ENCODE measurements at regions of chr19 and their contacts with region 1.

Region 1: DNA sequence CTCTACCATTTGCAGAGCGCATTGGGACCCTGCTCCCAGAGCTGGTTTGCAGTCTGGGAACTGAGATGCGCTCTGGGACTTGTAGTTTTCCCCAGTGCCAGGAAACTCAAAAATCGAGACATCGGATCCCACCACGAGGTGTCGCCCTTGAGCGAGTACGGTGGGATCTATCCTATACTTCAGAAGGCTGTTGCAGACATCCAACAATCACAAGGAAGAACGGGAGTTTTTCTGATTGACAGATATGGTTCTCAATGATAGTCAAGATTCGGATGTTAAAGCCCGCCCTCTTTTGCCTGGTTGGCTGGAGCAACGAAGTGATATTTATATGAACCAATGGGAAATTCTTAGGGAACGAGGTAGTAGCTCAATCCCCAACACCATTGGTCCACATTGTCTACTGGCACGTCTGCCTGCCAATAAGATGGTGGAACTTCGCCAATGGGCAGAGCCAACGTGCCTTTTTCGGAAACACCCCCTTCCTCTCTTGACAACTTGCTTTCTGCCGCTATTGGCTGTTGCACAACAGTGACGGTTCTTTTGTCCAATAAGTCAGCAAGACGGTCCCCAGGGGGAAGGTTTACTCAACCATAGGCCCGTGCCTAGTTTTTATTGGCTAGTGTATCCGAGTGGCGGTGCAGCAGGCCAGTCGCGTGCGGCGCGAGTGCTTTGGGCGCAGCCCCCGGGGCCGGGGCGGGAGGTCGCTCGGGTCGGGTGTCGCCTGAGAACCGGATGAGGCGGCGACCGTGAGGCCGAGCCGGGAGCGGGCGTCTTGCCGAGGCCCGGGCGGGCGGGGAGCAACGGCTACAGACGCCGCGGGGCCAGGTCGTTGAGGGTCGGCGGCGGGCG is at the start of gene DNM2:
- DNase-seq: peak; percentile 98 to 100 (median 99)
- ATAC-seq: peak; percentile 90
- H3K4me3 ChIP-seq: peak within 1 kb of the TSS; percentile 71 to 90
- H3K27ac ChIP-seq: peak within 1 kb of the TSS; percentile 62 to 95 (median 87)
- H3K4me1 ChIP-seq: peaks cover 39% of the 10 kb centered on the region
- H3K27me3 ChIP-seq: no peaks in the 10 kb centered on the region
- CTCF ChIP-seq: peak; percentile 64 to 99 (median 96)
- POLR2A ChIP-seq: peak; percentile 40 to 62 (median 60)
- total RNA-seq, gene DNM2: 98.6 to 158 TPM

Region 2: GRCh38 chr19:10769533-10770491 is 52.2 kb after region 1 on chr19:
- intact Hi-C with region 1: loop called (anchors 10 kb)
- DNase-seq: peak; percentile 71 to 84 (median 80)
- ATAC-seq: peak; percentile 84
- H3K4me3 ChIP-seq: no peak overlapping the region
- H3K27ac ChIP-seq: peak overlapping the region; percentile 46 to 75 (median 60)
- H3K4me1 ChIP-seq: peaks cover 58% of the 10 kb centered on the region
- H3K27me3 ChIP-seq: no peaks in the 10 kb centered on the region
- CTCF ChIP-seq: peak in 5 of 7 experiments; percentile 29 to 56 (median 51)
- POLR2A ChIP-seq: no peak

Region 3: GRCh38 chr19:10848230-10848856 is 130.8 kb after region 1 on chr19 and contains the start of gene C19orf38:
- intact Hi-C with region 1: loop called (anchors 10 kb)
- DNase-seq: no peak
- ATAC-seq: no peak
- H3K4me3 ChIP-seq: no peak within 1 kb of the TSS
- H3K27ac ChIP-seq: no peak within 1 kb of the TSS
- H3K4me1 ChIP-seq: no peaks in the 10 kb centered on the region
- H3K27me3 ChIP-seq: no peaks in the 10 kb centered on the region
- CTCF ChIP-seq: no peak
- POLR2A ChIP-seq: no peak
- total RNA-seq, gene C19orf38: 0.52 TPM in 1 of 2 donors, not detected in the other